Endothelial cell of umbilical vein (primary cell): ENCODE measurements at regions of chr11 and their contacts with region 1.

Region 1: DNA sequence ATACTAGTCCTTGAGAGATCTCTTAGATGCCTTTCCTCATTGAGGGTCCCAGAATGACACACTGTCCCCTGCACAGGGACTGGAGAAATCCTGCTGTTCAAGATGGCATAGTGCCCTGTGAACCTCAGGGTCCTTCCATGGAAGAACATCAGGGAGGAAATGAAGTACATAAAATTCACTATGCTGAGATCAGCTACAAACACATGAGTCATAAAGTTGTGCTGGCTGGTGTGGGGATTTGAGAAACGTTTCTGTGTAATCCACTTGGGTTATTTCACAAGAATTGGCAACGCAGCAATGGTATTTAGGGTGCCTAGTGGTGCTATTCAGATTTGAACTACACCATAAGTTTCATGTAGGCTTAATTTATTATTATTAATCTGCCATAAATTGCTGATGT is 174.4 kb downstream of the MAML2 start:
- DNase-seq: peak; percentile 69
- H3K4me3 ChIP-seq: no peak overlapping the region
- H3K27ac ChIP-seq: no peak overlapping the region
- H3K4me1 ChIP-seq: peaks cover 22% of the 10 kb centered on the region
- H3K27me3 ChIP-seq: no peaks in the 10 kb centered on the region
- CTCF ChIP-seq: no peak
- POLR2A ChIP-seq: no peak

Region 2: DNA sequence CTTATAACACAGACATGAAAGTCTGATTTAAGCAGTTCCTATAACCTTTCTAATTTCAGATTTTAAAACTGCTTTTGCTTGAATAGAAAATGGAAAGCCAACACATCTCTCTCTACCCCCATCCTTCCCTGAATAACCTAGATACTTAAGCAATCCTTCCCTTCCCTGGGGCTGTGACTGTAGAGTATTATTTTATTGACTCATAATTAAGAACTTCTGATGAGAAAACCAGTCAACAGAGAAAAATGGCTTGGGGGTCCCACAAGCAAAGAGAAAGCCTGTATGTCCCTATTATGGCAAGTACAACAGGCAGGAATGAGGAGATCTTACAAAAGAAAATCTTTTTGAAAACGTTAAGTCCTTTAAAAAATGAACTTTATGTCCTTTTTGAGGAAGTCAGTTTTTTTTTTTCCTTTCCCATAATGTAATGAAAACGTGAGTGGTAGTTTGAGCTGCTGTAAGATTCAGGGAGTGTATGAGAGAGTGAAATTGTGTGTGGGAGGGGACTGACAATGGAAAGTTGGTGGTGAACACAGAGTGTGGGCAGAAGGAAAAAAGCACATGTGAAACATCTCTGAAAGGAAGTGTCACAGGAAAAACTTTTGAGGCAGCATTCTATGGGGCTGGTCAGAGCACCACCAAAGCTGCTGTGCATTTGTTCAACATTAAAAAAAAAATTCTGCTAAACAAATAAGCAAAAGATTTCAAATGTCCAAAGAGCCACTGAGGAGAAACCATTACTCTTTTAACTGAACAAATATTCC is 19.8 kb after region 1 on chr11:
- CTCF ChIA-PET with region 1: interaction called, 3 read pairs
- POLR2A ChIA-PET with region 1: no interaction called
- dilution Hi-C with region 1: no loop called
- intact Hi-C with region 1: loop called (anchors 2 kb)
- DNase-seq: peak; percentile 49
- H3K4me3 ChIP-seq: no peak overlapping the region
- H3K27ac ChIP-seq: peak overlapping the region; percentile 26
- H3K4me1 ChIP-seq: peaks cover 19% of the 10 kb centered on the region
- H3K27me3 ChIP-seq: no peaks in the 10 kb centered on the region
- CTCF ChIP-seq: no peak
- POLR2A ChIP-seq: no peak

Region 3: DNA sequence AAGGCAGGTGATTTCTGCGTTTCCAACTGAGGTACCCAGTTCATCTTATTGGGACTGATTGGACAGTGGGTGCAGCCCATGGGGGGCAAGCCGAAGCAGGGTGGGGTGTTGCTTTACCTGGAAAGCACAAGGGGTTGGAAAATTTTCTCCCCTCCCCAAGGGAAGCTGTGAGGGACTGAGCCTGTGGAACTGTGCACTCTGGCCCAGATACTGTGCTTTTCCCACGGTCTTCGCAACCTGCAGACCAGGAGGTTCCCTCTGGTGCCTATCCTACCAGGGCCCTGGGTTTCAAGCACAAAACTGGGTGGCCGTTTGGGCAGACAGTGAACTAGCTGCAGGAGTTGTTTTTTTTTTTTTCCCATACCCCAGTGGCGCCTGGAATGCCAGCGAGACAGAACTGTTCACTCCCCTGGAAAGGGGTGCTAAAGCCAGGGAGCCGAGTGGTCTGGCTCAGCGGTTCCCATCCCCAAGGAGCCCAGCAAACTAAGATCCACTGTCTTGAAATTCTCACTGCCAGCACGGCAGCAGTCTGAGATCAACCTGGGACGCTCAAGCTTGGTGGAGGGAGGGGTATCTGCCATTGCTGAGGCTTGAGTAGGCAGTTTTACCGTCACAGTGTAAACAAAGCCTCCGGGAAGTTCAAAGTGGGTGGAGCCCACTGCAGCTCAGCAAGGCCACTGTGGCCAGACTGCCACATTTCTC is 318.4 kb after region 1 on chr11:
- CTCF ChIA-PET with region 1: no interaction called
- POLR2A ChIA-PET with region 1: no interaction called
- dilution Hi-C with region 1: no loop called
- intact Hi-C with region 1: no loop called
- DNase-seq: no peak
- H3K4me3 ChIP-seq: no peak overlapping the region
- H3K27ac ChIP-seq: no peak overlapping the region
- H3K4me1 ChIP-seq: no peaks in the 10 kb centered on the region
- H3K27me3 ChIP-seq: no peaks in the 10 kb centered on the region
- CTCF ChIP-seq: no peak
- POLR2A ChIP-seq: no peak